ENCODE measurements at regions of chr16 and their contacts with region 1.

Region 1: GRCh38 chr16:15996432-15997109 is 47.2 kb downstream of the ABCC1 start:
- DNase-seq: peak; percentile 91
- H3K4me3 ChIP-seq: no peak overlapping the region
- H3K27ac ChIP-seq: peak overlapping the region; percentile 43
- H3K4me1 ChIP-seq: peaks cover 44% of the 10 kb centered on the region
- H3K27me3 ChIP-seq: no peaks in the 10 kb centered on the region
- CTCF ChIP-seq: no peak; the same call in 1 of the 2 replicates

Region 2: GRCh38 chr16:15874745-15875314 is 121.7 kb before region 1 on chr16:
- CTCF ChIA-PET with region 1: interaction called, 4 read pairs
- POLR2A ChIA-PET with region 1: no interaction called
- intact Hi-C with region 1: loop called (anchors 1 kb)
- DNase-seq: peak; percentile 39 to 57
- H3K4me3 ChIP-seq: no peak overlapping the region
- H3K27ac ChIP-seq: peak overlapping the region; percentile 27
- H3K4me1 ChIP-seq: peaks cover 24% of the 10 kb centered on the region
- H3K27me3 ChIP-seq: no peaks in the 10 kb centered on the region
- CTCF ChIP-seq: peak; percentile 81

Region 3: DNA sequence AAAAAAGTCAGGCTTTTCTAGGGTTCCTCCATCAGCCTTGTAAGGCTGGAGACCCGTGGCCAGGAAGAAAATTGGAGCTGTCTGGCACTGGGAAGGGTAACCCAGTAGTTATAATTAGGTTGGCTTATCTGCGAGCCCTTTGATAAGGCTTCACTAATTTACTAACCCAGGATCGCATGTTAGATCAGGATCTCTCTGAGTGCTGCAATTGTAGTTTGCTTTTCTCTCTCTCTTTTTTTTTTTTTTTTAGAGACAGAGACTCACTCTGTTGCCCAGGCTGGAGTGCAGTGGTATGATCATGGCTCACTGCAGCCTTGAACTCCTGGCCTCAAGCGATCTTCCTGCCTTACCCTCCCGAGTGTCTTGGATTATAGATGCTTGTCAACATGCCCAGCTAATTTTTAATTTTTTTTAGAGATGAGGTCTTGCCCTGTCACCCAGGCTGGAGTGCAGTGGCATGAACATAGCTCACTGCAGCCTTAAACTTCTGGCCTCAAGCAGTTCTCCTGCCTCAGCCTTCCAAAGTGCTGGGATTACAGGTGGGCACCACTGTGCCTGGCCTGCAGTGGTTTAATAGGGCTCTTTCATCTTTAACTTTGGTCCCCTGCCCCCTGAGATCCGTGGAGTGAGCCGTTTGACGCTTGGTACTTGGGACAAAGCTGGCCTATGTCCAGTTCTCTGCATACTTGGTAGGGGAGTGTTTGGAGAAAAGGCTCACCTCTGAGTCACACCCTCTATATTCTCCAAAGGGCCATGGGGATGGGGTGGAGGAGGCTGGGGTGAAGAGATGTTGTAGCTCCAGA is 29.9 kb before region 1 on chr16:
- CTCF ChIA-PET with region 1: no interaction called
- POLR2A ChIA-PET with region 1: no interaction called
- intact Hi-C with region 1: loop called (anchors 1 kb)
- DNase-seq: peak; percentile 83 to 88
- H3K4me3 ChIP-seq: no peak overlapping the region; the same call in 1 of the 2 replicates
- H3K27ac ChIP-seq: peak overlapping the region; percentile 73
- H3K4me1 ChIP-seq: peaks cover 57% of the 10 kb centered on the region
- H3K27me3 ChIP-seq: no peaks in the 10 kb centered on the region
- CTCF ChIP-seq: no peak

Region 4: GRCh38 chr16:16042076-16042475 is 45.5 kb after region 1 on chr16:
- CTCF ChIA-PET with region 1: no interaction called
- POLR2A ChIA-PET with region 1: interaction called, 10 read pairs
- intact Hi-C with region 1: loop called (anchors 1 kb)
- DNase-seq: peak in 1 of 2 experiments; percentile 27
- H3K4me3 ChIP-seq: no peak overlapping the region
- H3K27ac ChIP-seq: no peak overlapping the region
- H3K4me1 ChIP-seq: peaks cover 28% of the 10 kb centered on the region
- H3K27me3 ChIP-seq: no peaks in the 10 kb centered on the region
- CTCF ChIP-seq: no peak

Region 5: DNA sequence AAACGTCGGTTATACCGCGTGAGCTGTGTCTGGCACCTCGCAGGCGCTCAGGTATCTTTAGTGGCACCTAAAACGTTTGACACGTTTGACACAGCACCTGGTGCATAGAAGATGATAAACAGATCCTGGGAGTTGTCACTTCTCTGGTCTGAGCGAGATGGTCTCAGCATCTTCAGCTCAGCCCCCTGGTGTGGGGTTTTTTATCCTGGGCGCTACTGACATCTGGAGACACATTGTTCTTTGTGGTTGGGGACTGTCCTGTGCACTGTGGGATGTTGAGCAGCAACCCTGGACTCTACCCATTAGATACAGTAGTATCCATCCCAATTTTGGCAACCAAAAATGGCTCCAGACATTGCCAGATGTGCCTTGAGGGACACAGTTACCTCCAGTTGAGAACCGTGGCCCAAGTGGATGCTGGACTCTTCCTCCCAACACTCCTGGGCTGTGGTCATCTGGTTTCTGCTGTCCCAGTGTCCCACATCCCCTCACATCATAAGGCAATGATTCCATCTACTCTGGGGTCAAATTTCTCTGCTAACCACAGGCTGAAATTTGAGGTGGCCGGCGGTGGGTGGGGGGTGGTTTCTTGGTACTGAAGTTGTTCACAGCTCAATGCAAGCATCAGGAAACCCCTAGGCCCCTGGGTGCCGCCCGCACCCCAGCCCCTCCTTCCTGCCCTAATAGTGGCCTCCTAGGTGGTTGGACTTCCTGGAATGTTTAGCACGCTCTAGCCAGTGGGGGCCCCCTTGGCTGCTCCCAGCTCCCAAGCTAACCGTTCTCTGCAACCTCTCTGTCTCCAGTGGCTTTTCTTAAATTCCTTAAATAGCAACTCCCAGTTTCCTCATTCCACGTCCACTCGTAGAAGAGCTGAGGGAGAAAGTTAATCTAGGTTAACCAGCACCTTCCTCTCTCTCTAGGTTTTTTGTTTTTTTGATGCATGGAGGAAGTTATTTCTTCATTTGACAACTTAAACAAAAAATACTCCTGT is 77.6 kb after region 1 on chr16:
- CTCF ChIA-PET with region 1: no interaction called
- POLR2A ChIA-PET with region 1: no interaction called
- intact Hi-C with region 1: loop called (anchors 1 kb)
- DNase-seq: peak; percentile 98 to 99
- H3K4me3 ChIP-seq: no peak overlapping the region; the same call in 1 of the 2 replicates
- H3K27ac ChIP-seq: peak overlapping the region; percentile 85
- H3K4me1 ChIP-seq: peaks cover 27% of the 10 kb centered on the region
- H3K27me3 ChIP-seq: no peaks in the 10 kb centered on the region
- CTCF ChIP-seq: no peak